ENCODE measurements at regions of chr3 and their contacts with region 1.

Region 1: DNA sequence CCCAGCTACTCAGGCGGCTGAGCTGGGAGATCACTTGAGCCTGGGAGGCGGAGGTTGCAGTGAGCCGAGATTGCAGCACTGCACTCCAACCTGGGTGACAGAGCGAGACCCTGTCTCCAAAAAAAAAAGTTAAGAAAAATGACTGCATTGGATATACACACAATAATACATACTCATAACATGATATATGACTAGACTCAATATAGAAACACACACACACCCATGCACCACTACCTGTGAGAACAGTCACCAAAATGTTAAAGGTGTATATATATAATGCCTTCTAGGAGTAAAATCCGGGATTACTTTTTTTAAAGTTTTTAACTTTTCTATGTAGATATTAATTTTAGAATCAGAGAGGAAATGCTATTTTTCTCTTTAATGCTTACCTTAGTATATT is 25.9 kb downstream of the PHC3 start:
- DNase-seq: no peak

Region 2: DNA sequence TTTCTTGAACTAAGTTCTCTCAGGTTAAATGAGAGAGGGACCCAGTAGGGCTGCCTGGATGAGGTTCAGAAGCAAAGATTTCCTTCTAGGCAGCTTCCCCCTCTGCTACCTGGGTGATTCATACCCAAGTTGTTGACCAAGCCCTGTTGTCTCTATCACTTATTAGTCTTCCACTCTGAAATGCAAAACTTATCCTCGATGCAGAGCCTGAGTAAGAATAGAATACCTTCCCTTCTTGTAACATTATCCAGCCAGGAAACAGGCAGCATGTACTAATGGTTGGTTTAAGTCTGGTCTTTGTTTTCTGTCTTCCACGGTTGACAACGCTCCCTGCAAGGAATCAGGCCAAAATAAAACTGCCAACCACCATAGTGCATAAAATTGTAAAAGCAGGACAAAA is 869.4 kb before region 1 on chr3:
- intact Hi-C with region 1: no loop called
- DNase-seq: no peak

Region 3: DNA sequence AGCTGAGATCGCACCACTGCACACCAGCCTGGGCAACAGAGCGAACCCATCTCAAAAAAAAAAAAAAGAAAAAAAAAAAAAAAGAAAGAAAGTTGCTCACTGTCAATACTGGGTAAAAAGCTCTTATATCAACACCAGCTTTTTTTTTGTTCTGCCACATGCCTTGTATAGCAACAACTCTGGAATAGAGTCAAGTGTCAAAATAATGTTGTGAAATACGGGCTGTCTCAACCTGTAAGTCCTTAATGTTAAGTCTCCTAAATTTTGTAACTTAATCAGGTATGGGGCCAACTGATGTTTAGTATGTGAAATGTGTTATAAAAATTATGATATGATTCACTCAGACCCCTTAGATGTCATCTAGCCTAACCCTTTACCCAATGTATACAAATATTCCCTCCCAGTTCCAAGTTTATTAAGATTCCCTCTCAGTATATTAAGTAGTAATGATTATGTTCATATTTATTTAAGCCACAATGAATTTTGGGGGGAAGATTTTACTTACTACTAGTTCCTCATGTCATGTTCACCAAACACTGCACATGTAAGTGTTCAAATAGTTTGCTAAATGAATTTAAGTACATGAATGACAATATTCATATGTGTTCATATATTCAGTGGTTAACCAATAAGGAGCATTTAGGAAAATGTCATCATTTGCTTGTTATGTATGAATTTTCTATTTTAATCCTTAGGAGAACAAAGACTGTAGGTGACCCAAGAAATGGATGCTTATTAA is 65.6 kb before region 1 on chr3:
- intact Hi-C with region 1: loop called in 1 of 2 experiments (anchors 2 kb)
- DNase-seq: no peak

Region 4: DNA sequence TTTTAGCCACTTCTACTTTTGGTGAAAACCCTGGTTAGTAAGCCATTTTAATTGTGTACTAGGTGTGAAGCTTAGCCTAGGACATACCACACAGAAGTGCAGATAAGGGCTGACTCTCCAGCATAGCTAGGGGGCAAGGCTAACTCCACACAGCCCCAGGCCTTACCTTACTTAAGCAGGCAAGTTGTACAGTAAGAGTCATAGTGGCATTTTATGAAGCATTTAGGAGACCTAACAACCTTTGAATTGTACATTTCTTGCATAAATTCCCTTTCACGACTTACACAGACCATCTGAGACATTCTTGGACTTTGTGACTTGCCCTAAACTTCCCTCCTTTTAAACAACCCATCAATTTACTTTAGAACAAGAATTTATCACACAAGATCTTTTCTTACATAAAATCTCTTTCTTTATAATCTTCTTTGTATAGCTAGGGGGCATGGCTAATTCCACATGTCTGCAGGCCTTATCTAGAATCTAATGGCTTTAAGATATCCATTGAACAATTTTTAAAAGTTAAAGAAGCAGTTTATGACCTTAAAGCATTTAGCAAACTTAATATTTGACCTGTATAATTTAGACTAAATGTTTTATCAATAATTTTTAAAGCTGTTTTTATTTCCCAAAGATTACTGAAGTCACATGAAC is 183.2 kb after region 1 on chr3:
- intact Hi-C with region 1: no loop called
- DNase-seq: no peak

Measured in posterior vena cava (tissue), 2 donors.